Activated naive CD4-positive, alpha-beta T cell treated with anti-CD3 and anti-CD28 coated beads for 36 hours (primary cell): ENCODE measurements at regions of chr7 and their contacts with region 1.

Region 1: DNA sequence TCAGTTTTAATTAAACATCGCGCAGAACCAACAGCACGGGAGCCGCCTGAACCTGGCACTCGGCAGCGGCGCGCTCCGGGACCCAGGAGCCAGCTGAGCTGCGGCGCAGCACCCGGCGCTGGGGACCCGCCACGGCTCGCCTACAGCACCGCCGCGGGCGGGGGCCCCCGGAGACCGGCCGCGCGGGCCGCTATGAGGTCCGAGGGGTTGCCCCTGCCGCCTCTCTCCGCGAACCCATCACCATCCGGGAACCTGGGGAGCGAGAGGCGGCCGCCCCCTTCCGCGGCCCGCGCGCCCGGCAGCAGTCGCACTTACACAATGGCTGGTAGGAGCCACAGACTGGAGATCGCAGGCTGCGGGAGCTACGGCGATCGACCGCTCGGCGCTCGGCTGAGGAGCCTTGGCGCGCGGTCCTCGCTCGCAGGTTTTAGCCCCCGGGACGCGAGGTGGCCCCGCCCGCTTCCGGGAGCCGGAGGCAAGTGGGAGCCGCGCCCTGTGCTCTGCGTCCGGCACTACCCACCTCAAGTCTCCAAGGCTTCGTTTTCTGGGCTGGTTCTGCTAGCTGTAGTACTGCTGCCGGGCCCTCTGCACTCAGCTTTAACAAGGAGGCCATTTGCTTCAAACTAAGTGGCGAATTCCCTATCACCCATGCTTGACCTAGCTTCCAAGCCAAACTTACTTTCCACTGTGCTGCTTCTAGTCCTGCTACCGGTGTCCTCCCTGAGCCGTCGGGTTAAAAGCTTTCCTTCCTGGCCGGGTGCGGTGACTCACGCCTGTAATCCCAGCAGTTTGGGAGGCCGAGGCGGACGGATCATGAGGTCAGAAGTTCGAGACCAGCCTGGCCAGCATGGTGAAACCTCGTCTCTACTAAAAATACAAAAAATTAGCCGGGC is at the start of gene TPK1:
- DNase-seq: peak; percentile 90
- H3K4me3 Mint-ChIP-seq: peak within 1 kb of the TSS; percentile 92
- H3K27ac Mint-ChIP-seq: peak within 1 kb of the TSS; percentile 99
- H3K4me1 Mint-ChIP-seq: peaks cover 39% of the 10 kb centered on the region
- H3K27me3 Mint-ChIP-seq: no peaks in the 10 kb centered on the region
- total RNA-seq, gene TPK1: 26.4 to 28.6 TPM

Region 2: DNA sequence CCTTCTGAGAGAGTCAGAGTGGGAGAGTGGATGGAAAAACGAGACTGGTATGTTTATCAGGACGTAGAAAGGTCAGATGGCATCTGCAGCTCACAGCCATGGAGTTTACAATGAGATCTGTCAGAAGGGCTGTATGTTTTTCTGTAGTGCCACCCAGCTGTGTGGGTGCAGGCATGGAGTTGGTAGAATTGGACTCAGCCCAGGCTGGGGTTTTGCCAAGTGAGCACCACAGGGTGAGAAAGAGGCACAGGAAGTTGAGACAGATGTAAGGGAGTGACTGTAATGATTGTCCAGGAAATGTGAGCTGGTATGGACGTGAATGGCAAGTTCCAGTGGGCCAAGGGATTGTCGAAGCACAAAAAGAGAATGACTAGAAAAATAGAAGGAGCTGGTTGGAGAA is 1463.8 kb before region 1 on chr7:
- CTCF ChIA-PET with region 1: no interaction called
- intact Hi-C with region 1: loop called (anchors 10 kb)
- DNase-seq: peak; percentile 90
- H3K4me3 Mint-ChIP-seq: no peak overlapping the region
- H3K27ac Mint-ChIP-seq: peak overlapping the region; percentile 24
- H3K4me1 Mint-ChIP-seq: peaks cover 41% of the 10 kb centered on the region
- H3K27me3 Mint-ChIP-seq: no peaks in the 10 kb centered on the region

Region 3: DNA sequence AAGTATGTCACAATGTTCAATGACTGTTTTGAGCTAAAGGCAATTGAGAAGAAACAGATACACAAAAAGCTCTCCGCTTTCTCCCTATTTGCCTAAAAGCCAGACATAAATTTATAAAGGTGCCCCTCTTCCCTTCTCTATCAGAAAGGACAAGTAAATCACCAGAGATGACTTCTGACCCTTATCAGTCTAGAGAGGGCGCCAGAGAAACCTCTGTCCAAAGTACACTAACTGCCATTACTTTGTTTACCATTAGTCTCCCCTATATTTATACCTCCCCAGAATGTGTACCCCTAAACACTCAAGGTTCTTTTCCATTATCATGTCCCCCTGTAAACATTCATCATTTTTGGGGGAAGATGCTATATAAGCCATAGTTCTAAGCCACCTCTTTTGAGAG is 49.4 kb before region 1 on chr7:
- CTCF ChIA-PET with region 1: interaction called, 3 read pairs
- intact Hi-C with region 1: loop called (anchors 1 kb)
- DNase-seq: no peak
- H3K4me3 Mint-ChIP-seq: no peak overlapping the region
- H3K27ac Mint-ChIP-seq: no peak overlapping the region
- H3K4me1 Mint-ChIP-seq: peaks cover 22% of the 10 kb centered on the region
- H3K27me3 Mint-ChIP-seq: no peaks in the 10 kb centered on the region

Region 4: DNA sequence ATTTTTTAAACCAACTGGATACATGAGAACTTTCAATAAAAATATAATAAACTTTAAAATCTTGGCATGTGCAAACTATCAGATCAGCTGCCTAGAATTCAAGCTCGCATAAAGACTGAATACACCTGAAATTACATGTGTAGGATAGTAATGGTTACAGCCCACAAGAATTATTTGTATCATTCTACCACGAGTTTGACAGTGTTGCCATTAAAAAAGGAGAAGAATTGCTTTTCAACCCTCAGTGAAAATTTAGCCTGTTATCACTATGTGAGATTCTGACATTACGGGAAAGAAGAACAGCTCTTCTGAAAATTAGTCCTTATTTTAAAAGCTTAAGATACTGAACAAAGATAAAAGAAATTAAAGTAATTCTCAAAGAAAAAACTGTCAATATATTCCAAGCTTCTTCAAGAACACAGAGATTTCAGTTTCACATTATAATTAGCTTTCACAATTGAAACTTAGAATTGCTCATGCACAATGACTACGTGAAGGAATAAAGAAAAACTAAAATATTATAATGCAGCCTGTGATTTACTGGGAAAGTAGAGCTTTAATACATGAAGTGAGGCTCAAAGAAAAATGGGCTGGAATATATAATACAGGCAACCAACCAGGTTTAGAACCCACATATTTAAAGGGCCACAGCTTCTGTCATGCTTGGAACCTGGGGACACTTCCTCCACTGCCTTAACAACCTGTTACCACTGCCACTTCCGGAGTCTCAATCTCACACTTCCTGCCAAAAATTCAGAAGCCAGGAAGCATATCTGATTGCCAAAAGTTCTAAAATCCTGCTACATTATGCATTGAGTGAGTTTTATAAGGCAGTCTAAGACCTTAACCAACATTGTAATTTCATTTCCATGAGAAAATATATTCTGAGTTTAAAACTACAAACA is 23.3 kb before region 1 on chr7:
- CTCF ChIA-PET with region 1: interaction called, 30 read pairs
- intact Hi-C with region 1: loop called (anchors 1 kb)
- DNase-seq: peak; percentile 70
- H3K4me3 Mint-ChIP-seq: peak overlapping the region; percentile 72
- H3K27ac Mint-ChIP-seq: peak overlapping the region; percentile 95
- H3K4me1 Mint-ChIP-seq: peaks cover 61% of the 10 kb centered on the region
- H3K27me3 Mint-ChIP-seq: no peaks in the 10 kb centered on the region

Region 5: DNA sequence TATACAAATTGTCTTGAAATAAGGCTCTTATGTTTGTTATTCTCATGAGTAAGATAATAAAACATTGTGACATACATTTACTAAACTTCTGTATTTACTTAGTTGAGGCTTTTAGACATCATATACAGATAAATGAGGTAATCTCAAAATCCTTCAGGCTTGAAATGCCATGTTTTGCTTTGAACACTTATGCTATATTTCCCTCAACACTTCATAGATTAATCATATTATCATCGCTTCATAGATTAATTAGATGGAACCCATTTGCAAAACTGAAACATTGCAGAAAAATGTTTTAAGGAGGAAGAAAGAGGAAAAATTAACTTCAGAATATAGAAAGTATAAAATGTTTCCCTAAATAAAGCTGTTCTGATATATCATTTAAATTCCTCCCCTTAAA is 1115.7 kb after region 1 on chr7:
- CTCF ChIA-PET with region 1: no interaction called
- intact Hi-C with region 1: no loop called
- DNase-seq: no peak
- H3K4me3 Mint-ChIP-seq: no peak overlapping the region
- H3K27ac Mint-ChIP-seq: no peak overlapping the region
- H3K4me1 Mint-ChIP-seq: no peaks in the 10 kb centered on the region
- H3K27me3 Mint-ChIP-seq: no peaks in the 10 kb centered on the region